ENCODE measurements at regions of chr2 and their contacts with region 1.

Region 1: DNA sequence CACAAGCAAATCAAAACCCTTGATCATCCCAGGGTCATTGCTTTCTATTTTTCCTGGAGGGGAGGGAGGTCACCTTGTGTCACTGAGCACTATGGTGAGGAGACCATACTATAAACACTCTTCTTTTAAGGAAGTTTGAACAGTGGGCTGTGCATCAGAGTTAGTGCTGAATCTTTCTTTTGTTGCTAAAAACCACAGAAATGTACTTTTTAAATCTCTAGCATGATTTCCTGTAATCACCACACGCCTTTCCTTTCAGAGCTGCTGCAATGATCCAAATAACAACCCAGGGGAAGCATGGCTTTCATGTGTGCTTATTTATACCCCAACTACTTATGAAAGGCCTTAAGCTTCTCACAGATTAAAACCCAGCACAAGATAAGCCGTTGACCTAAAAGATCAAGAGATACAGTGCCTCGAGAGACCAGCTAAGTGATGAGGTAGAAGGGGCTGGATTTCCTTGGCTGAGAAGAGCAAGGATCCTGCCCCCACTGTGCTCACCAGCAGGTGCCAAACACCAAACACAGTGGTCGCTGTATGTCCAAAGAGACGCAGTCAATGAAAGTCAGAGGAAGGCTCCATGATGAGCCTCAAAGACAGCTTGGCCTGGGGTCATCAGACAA is 34.7 kb downstream of the TRABD2A start:
- DNase-seq: peak; percentile 88
- H3K4me3 Mint-ChIP-seq: peak overlapping the region; percentile 70
- H3K27ac Mint-ChIP-seq: peak overlapping the region; percentile 92
- H3K4me1 Mint-ChIP-seq: peaks cover 84% of the 10 kb centered on the region
- H3K27me3 Mint-ChIP-seq: no peaks in the 10 kb centered on the region

Region 2: DNA sequence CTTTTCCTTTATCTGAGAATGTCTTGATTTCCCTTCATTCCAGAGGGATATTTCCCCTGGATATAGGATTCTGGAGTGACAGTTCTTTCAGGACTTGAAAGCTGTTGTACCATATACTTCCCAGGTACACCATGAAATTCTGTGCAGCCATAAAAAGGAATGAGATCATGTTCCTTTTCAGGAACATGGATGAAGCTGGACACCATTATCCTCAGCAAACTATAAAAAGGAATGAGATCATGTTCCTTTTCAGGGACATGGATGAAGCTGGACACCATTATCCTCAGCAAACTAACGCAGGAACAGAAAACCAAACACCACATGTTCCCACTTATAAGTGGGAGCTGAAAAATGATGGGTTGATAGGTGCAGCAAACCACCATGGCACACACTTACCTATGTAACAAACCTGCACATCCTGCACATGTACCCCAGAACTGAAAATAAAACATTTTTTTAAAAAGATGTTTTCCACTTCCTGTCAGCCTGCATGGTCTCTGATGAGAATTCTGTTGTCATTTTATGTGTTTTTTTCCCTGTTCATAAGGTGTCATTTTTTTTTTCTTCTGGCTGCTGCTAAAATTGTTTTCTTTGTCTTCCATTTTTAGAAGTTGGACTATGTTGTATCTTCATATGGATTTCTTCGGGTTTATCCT is 196.5 kb before region 1 on chr2:
- intact Hi-C with region 1: loop called (anchors 10 kb)
- DNase-seq: no peak
- H3K4me3 Mint-ChIP-seq: peak overlapping the region; percentile 20
- H3K27ac Mint-ChIP-seq: no peak overlapping the region
- H3K4me1 Mint-ChIP-seq: peaks cover 55% of the 10 kb centered on the region
- H3K27me3 Mint-ChIP-seq: no peaks in the 10 kb centered on the region

Region 3: DNA sequence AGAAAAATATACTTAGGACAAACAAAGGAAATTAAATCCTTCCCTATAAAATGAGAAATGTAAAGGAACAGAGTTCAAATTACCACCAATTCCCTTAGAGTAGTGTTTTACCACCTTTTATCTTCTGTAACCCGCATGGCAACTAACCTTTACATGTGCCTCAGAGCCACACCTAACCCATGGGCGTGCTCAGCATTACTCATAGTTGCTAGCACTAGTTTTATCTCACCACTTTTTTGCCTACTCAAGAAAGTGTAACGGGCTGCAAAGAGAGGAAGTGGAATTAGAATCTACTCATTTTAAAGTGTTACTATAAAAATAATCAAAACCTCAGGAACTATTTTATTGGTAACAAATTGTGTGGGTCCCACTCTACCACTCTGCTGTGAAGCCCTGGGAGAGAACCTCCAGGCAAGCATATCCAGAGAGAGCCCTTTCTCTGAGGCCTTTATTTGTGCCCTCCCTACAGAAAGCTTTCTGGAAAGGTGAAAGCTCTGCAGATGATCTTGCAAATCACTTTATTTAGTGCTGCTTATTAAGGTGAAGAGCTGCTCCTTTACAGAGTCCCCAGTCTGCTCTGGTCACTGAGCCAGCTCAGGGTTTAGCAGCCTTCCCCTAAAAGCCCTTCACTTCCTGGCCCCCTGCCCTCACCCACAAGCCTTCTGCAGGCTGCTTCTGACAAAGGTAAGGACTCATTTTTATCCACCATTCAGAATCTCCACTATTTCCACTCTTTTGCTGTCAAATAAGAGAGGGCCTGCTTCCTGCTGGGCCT is 64.0 kb before region 1 on chr2:
- intact Hi-C with region 1: loop called (anchors 2 kb)
- DNase-seq: peak; percentile 86
- H3K4me3 Mint-ChIP-seq: peak overlapping the region; percentile 50
- H3K27ac Mint-ChIP-seq: peak overlapping the region; percentile 90
- H3K4me1 Mint-ChIP-seq: peaks cover 57% of the 10 kb centered on the region
- H3K27me3 Mint-ChIP-seq: no peaks in the 10 kb centered on the region

Region 4: GRCh38 chr2:84817239-84817655 is 28.9 kb before region 1 on chr2:
- intact Hi-C with region 1: loop called (anchors 1 kb)
- DNase-seq: no peak
- H3K4me3 Mint-ChIP-seq: peak overlapping the region; percentile 9
- H3K27ac Mint-ChIP-seq: peak overlapping the region; percentile 56
- H3K4me1 Mint-ChIP-seq: peaks cover 32% of the 10 kb centered on the region
- H3K27me3 Mint-ChIP-seq: no peaks in the 10 kb centered on the region

Region 5: GRCh38 chr2:84865181-84865783 is 19.1 kb after region 1 on chr2:
- intact Hi-C with region 1: loop called (anchors 2 kb)
- DNase-seq: peak; percentile 72
- H3K4me3 Mint-ChIP-seq: no peak overlapping the region
- H3K27ac Mint-ChIP-seq: peak overlapping the region; percentile 45
- H3K4me1 Mint-ChIP-seq: peaks cover 55% of the 10 kb centered on the region
- H3K27me3 Mint-ChIP-seq: no peaks in the 10 kb centered on the region

Region 6: GRCh38 chr2:85148182-85148581 is 302.0 kb after region 1 on chr2:
- intact Hi-C with region 1: no loop called
- DNase-seq: no peak
- H3K4me3 Mint-ChIP-seq: no peak overlapping the region
- H3K27ac Mint-ChIP-seq: no peak overlapping the region
- H3K4me1 Mint-ChIP-seq: no peaks in the 10 kb centered on the region
- H3K27me3 Mint-ChIP-seq: peaks cover 18% of the 10 kb centered on the region